Activated B cell treated with CpG ODN at 0.5 μM for 24 hours (primary cell): ENCODE measurements at regions of chr6 and their contacts with region 1.

Region 1: DNA sequence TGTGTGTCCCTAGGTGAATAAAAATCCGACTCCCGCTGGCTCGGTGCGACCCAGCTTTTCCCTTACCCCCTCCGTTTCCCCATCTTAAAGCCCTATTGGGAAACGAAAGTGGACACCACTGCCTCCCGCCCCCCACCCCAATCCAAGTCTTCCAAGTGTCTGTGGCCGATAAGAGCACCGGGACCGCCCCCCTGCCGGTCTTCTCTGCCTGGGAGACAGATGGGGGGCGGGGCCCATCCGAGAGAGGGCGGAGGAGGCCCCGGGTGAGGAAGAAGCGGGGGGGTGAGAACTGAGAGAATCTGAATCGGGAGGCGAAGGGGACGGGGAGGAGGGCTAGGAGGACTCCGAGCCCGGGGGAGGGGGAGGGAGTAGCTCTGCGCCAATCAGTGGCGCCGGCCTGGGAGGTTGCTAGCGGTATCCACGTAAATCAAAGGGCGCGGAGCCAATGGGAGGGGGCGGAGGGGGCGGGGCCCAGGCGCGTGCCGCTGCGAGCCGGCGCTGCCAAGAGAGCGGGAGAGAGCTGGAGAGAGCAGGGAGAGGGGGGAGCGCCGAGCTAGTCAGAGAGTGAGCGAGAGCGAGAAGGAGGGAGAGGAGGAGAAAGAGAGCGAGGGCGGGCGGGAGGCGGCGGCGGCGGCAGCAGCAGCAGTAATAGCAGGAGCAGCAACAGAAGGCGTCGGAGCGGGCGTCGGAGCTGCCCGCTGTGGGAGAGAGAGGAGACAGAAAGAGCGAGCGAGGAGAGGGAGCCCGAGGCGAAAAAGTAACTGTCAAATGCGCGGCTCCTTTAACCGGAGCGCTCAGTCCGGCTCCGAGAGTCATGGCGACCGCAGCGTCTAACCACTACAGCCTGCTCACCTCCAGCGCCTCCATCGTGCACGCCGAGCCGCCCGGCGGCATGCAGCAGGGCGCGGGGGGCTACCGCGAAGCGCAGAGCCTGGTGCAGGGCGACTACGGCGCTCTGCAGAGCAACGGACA is at the start of gene POU3F2:
- DNase-seq: peak; percentile 48
- ATAC-seq: peak; percentile 88
- H3K4me3 Mint-ChIP-seq: peak within 1 kb of the TSS; percentile 89
- H3K27ac Mint-ChIP-seq: no peak within 1 kb of the TSS
- H3K4me1 Mint-ChIP-seq: peaks cover 47% of the 10 kb centered on the region
- H3K27me3 Mint-ChIP-seq: peaks cover 60% of the 10 kb centered on the region
- CTCF ChIP-seq: no peak
- total RNA-seq, gene POU3F2: not detected in 2 replicates

Region 2: GRCh38 chr6:96923871-96924493 is 1910.4 kb before region 1 on chr6:
- CTCF ChIA-PET with region 1: no interaction called
- POLR2A ChIA-PET with region 1: no interaction called
- intact Hi-C with region 1: loop called (anchors 10 kb)
- DNase-seq: no peak
- ATAC-seq: peak; percentile 10
- H3K4me3 Mint-ChIP-seq: peak overlapping the region; percentile 94
- H3K27ac Mint-ChIP-seq: peak overlapping the region; percentile 92
- H3K4me1 Mint-ChIP-seq: peaks cover 24% of the 10 kb centered on the region
- H3K27me3 Mint-ChIP-seq: peaks cover 3% of the 10 kb centered on the region
- CTCF ChIP-seq: no peak

Region 3: GRCh38 chr6:99603421-99604165 is 769.2 kb after region 1 on chr6:
- CTCF ChIA-PET with region 1: no interaction called
- POLR2A ChIA-PET with region 1: no interaction called
- intact Hi-C with region 1: loop called (anchors 5 kb)
- DNase-seq: no peak
- ATAC-seq: peak; percentile 54
- H3K4me3 Mint-ChIP-seq: peak overlapping the region; percentile 76
- H3K27ac Mint-ChIP-seq: no peak overlapping the region
- H3K4me1 Mint-ChIP-seq: peaks cover 30% of the 10 kb centered on the region
- H3K27me3 Mint-ChIP-seq: peaks cover 74% of the 10 kb centered on the region
- CTCF ChIP-seq: no peak

Region 4: GRCh38 chr6:100464903-100465700 is 1630.8 kb after region 1 on chr6 and contains the start of gene SIM1:
- CTCF ChIA-PET with region 1: no interaction called
- POLR2A ChIA-PET with region 1: no interaction called
- intact Hi-C with region 1: loop called (anchors 5 kb)
- DNase-seq: no peak
- ATAC-seq: no peak
- H3K4me3 Mint-ChIP-seq: peak within 1 kb of the TSS; percentile 48
- H3K27ac Mint-ChIP-seq: peak within 1 kb of the TSS; percentile 46
- H3K4me1 Mint-ChIP-seq: peaks cover 20% of the 10 kb centered on the region
- H3K27me3 Mint-ChIP-seq: peaks cover 72% of the 10 kb centered on the region
- CTCF ChIP-seq: no peak
- total RNA-seq, gene SIM1: not detected in 2 replicates